Naive thymus-derived CD8-positive, alpha-beta T cell (primary cell): ENCODE measurements at regions of chr5 and their contacts with region 1.

Region 1: DNA sequence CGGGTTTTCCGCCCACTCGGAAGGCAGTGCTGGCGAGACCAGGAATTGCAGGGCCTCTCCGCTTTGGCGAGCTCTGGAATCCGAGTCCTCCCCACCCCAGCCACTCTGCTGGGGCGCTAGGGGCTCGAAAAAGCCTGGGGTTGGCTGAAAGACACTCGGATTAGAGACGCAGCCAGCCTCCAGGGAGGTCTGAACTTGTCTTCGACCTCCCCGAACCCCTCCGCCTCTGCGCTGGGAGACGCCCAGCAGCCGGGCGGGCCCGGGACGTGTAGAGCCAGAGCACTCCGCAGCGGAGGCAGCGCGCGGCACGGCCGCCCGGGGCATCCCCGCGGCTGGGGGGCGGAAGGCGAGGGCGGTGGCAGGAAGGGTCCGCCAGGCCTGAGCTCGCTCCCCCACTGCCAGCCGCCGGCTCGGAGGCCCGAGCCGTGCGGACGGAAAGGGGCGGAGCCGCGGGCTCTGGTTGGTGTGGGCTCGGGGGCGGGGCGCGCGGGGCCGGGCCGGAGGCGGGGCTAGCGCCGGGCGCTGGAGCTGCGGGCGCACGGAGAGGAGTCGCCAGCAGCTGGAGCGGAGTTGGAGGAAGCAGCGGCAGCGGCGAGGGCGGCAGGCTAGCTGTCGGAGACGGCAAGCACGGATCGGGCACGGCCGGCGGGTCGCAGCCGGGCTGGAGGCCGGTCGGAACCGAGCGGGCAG is at the start of gene PIK3R1:
- DNase-seq: peak; percentile 84 to 95 (median 91)
- ATAC-seq: peak; percentile 72 to 73
- H3K4me3 Mint-ChIP-seq: peak within 1 kb of the TSS; percentile 91 to 97 (median 94)
- H3K27ac Mint-ChIP-seq: peak within 1 kb of the TSS; percentile 87 to 96 (median 94)
- H3K4me1 Mint-ChIP-seq: peaks cover 28 to 47% (median 45%) of the 10 kb centered on the region in 4 donors
- H3K27me3 Mint-ChIP-seq: no peaks in the 10 kb centered on the region
- polyA plus RNA-seq, gene PIK3R1: 69.1 to 98.1 (median 71.3) TPM

Region 2: GRCh38 chr5:68229416-68229815 is 14.1 kb after region 1 on chr5:
- POLR2A ChIA-PET with region 1: interaction called, 43 read pairs
- DNase-seq: no peak
- ATAC-seq: no peak
- H3K4me3 Mint-ChIP-seq: peak overlapping the region in 5 of 10 donors; percentile 14 to 31 (median 19)
- H3K27ac Mint-ChIP-seq: peak overlapping the region in 8 of 10 donors; percentile 2 to 93 (median 36)
- H3K4me1 Mint-ChIP-seq: peaks cover 47 to 96% (median 90%) of the 10 kb centered on the region in 4 donors
- H3K27me3 Mint-ChIP-seq: no peaks in the 10 kb centered on the region

Region 3: DNA sequence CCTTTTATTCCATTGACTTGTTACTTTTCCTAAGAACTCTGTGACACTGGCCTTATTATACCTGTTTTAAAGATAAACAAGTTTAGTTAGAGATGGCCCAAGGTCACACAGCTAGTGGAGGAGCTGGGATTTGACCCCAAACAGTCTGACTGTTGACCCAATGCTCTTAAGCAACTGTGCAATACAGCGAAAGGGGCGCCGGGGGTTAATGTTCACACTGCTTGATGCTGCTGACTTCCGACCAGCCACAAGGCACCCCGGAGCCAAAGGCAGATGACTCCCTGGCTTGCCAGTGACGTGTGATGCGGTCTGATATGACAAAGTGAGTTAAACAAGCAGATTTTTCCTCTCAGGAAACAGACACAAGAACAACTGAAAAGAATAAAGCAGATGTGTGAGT is 24.1 kb after region 1 on chr5:
- POLR2A ChIA-PET with region 1: interaction called, 43 read pairs
- DNase-seq: peak; percentile 60 to 92 (median 83)
- ATAC-seq: peak; percentile 95 to 97
- H3K4me3 Mint-ChIP-seq: peak overlapping the region; percentile 16 to 80 (median 64)
- H3K27ac Mint-ChIP-seq: peak overlapping the region; percentile 60 to 96 (median 88)
- H3K4me1 Mint-ChIP-seq: peaks cover 38 to 87% (median 82%) of the 10 kb centered on the region in 4 donors
- H3K27me3 Mint-ChIP-seq: no peaks in the 10 kb centered on the region

Region 4: DNA sequence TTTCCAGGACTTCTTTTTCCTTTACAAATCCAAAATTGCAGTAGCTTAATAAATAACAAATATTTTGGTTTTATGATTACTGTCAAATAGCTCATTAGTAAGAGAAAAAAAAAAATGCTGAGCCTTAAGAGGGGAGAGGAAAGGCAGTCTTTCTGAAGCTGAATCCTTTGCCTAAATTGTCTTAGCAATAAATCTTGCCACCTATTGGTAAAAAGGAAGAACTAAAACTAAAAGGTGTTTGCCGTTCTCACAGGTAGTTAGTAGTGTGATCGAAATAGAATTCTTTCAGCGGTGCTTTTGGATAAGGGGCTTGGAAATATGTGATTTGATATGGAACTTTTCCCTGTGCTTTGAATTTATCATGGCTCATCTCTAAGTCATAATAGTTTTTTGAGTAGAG is 31.4 kb after region 1 on chr5:
- POLR2A ChIA-PET with region 1: interaction called, 40 read pairs
- DNase-seq: peak in 2 of 10 donors; percentile 49 to 50
- ATAC-seq: peak; percentile 41 to 53
- H3K4me3 Mint-ChIP-seq: peak overlapping the region in 3 of 10 donors; percentile 2 to 33 (median 5)
- H3K27ac Mint-ChIP-seq: peak overlapping the region in 6 of 10 donors; percentile 0 to 73 (median 64)
- H3K4me1 Mint-ChIP-seq: peaks cover 33 to 87% (median 80%) of the 10 kb centered on the region in 4 donors
- H3K27me3 Mint-ChIP-seq: no peaks in the 10 kb centered on the region

Region 5: GRCh38 chr5:68252673-68253623 is 37.6 kb after region 1 on chr5:
- POLR2A ChIA-PET with region 1: interaction called, 40 read pairs
- DNase-seq: peak in 9 of 10 donors; percentile 17 to 68 (median 30)
- ATAC-seq: peak in 1 of 2 donors; percentile 24
- H3K4me3 Mint-ChIP-seq: peak overlapping the region in 3 of 10 donors; percentile 3 to 43 (median 36)
- H3K27ac Mint-ChIP-seq: peak overlapping the region; percentile 60 to 95 (median 90)
- H3K4me1 Mint-ChIP-seq: peaks cover 49 to 95% (median 92%) of the 10 kb centered on the region in 4 donors
- H3K27me3 Mint-ChIP-seq: no peaks in the 10 kb centered on the region

Region 6: GRCh38 chr5:68279984-68280383 is 64.6 kb after region 1 on chr5:
- POLR2A ChIA-PET with region 1: interaction called, 35 read pairs
- DNase-seq: peak in 9 of 10 donors; percentile 26 to 83 (median 58)
- ATAC-seq: peak; percentile 97 to 98
- H3K4me3 Mint-ChIP-seq: peak overlapping the region; percentile 78 to 96 (median 90)
- H3K27ac Mint-ChIP-seq: peak overlapping the region; percentile 90 to 98 (median 95)
- H3K4me1 Mint-ChIP-seq: peaks cover 37 to 93% (median 84%) of the 10 kb centered on the region in 4 donors
- H3K27me3 Mint-ChIP-seq: no peaks in the 10 kb centered on the region

Region 7: GRCh38 chr5:68287976-68288706 is 72.8 kb after region 1 on chr5:
- POLR2A ChIA-PET with region 1: interaction called, 11 read pairs
- DNase-seq: peak; percentile 4 to 69 (median 40)
- ATAC-seq: peak; percentile 80
- H3K4me3 Mint-ChIP-seq: peak overlapping the region; percentile 78 to 95 (median 92)
- H3K27ac Mint-ChIP-seq: peak overlapping the region; percentile 91 to 97 (median 94)
- H3K4me1 Mint-ChIP-seq: peaks cover 28 to 91% (median 88%) of the 10 kb centered on the region in 4 donors
- H3K27me3 Mint-ChIP-seq: no peaks in the 10 kb centered on the region

Region 8: GRCh38 chr5:68369457-68370125 is 154.2 kb after region 1 on chr5:
- POLR2A ChIA-PET with region 1: no interaction called
- DNase-seq: peak in 6 of 10 donors; percentile 12 to 48 (median 30)
- ATAC-seq: peak; percentile 59 to 81
- H3K4me3 Mint-ChIP-seq: peak overlapping the region; percentile 48 to 78 (median 72)
- H3K27ac Mint-ChIP-seq: peak overlapping the region in 9 of 10 donors; percentile 19 to 83 (median 70)
- H3K4me1 Mint-ChIP-seq: peaks cover 14 to 49% (median 33%) of the 10 kb centered on the region in 4 donors
- H3K27me3 Mint-ChIP-seq: peaks cover 0 to 8% (median 0%) of the 10 kb centered on the region in 5 donors